Activated B cell treated with CpG ODN at 0.5 μM for 24 hours (primary cell): ENCODE measurements at regions of chr14 and their contacts with region 1.

Region 1: DNA sequence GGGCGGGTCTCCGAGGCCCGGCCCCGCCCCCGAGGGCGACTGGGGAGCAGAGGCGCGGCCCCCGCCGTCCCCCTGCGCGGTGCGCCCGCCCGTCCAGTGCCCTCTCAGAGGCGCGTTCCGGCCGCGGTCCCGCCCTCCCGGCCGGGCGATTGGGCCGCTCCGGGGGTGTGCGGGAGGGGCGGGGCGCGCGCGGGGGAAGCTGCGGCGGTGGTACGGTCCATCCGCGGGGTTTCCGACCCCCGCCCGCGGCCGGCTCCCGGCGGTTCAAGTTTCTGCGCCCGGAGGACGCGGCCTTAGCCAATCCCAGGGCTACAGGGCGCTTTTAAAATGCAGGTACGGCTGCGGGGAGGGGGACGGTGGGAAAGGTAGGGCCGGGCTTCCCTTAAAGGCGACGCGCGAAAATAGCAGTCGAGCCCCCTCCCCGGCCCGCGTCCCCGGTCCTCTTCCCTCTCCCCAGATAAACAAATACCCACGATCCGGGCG is 317 bp upstream of the CCDC85C start:
- DNase-seq: peak; percentile 96
- ATAC-seq: peak; percentile 94
- H3K4me3 Mint-ChIP-seq: peak overlapping the region; percentile 88
- H3K27ac Mint-ChIP-seq: peak overlapping the region; percentile 71
- H3K4me1 Mint-ChIP-seq: peaks cover 9% of the 10 kb centered on the region
- H3K27me3 Mint-ChIP-seq: no peaks in the 10 kb centered on the region
- CTCF ChIP-seq: no peak

Region 2: DNA sequence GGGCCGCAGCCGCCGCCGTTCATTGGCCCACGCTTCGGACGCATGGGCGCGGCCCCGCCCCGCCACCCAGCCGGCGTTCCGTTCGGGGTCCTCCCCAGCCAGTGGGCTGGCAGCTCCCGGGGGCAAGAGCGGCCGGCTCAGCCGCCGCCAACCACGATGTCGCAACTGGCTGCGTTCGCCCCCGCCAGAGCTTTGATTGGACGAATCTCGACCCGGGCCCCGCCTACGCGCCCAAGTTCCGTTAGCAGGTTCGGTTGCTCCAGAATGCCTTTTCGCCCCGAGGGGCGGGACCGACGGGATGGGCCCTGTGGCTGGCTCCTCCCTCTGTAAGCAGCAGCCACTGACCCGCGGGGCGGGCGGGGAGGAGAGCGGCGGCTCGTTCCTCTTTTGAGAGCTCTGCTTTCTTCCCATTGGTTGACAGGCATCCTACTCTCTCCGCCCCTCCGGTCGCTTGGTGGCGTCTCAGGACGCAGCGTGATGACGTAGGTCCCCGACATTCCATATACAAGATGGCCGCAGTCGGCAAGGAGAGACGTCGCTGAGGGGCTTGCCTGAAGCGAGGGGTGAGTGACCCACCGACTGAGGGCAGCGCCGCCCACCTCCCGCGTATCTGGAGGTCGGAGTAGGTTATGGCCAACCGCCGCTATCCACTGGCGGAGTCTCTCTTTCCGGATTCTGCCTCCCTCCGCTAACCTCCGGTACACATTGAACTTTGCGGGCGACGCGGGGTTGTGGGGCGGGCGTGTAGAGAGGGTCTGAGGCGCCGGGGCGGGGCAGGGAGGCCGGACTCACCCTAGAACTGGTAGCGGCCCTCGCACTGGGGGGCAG is 123.2 kb before region 1 on chr14 and contains the start of gene CCNK:
- CTCF ChIA-PET with region 1: interaction called, 5 read pairs
- POLR2A ChIA-PET with region 1: interaction called, 27 read pairs
- intact Hi-C with region 1: loop called (anchors 1 kb)
- DNase-seq: peak; percentile 99
- ATAC-seq: peak; percentile 87
- H3K4me3 Mint-ChIP-seq: peak within 1 kb of the TSS; percentile 97
- H3K27ac Mint-ChIP-seq: peak within 1 kb of the TSS; percentile 96
- H3K4me1 Mint-ChIP-seq: peaks cover 59% of the 10 kb centered on the region
- H3K27me3 Mint-ChIP-seq: no peaks in the 10 kb centered on the region
- CTCF ChIP-seq: no peak
- total RNA-seq, gene CCNK: 76.7 and 79.2 TPM in 2 replicates

Region 3: GRCh38 chr14:99671230-99672224 is 67.2 kb after region 1 on chr14:
- CTCF ChIA-PET with region 1: no interaction called
- POLR2A ChIA-PET with region 1: no interaction called
- intact Hi-C with region 1: no loop called
- DNase-seq: no peak
- ATAC-seq: no peak
- H3K4me3 Mint-ChIP-seq: no peak overlapping the region
- H3K27ac Mint-ChIP-seq: no peak overlapping the region
- H3K4me1 Mint-ChIP-seq: peaks cover 6% of the 10 kb centered on the region
- H3K27me3 Mint-ChIP-seq: peaks cover 27% of the 10 kb centered on the region
- CTCF ChIP-seq: no peak

Region 4: GRCh38 chr14:99971087-99971940 is 367.0 kb after region 1 on chr14:
- CTCF ChIA-PET with region 1: no interaction called
- POLR2A ChIA-PET with region 1: no interaction called
- intact Hi-C with region 1: loop called (anchors 1 kb)
- DNase-seq: peak; percentile 68
- ATAC-seq: peak; percentile 90
- H3K4me3 Mint-ChIP-seq: peak overlapping the region; percentile 76
- H3K27ac Mint-ChIP-seq: no peak overlapping the region
- H3K4me1 Mint-ChIP-seq: peaks cover 12% of the 10 kb centered on the region
- H3K27me3 Mint-ChIP-seq: peaks cover 46% of the 10 kb centered on the region
- CTCF ChIP-seq: no peak